Endothelial cell of umbilical vein (primary cell): ENCODE measurements at regions of chr19 and their contacts with region 1.

Region 1: GRCh38 chr19:12139885-12140547 is at the start of gene ZNF20:
- DNase-seq: peak; percentile 90
- H3K4me3 ChIP-seq: peak within 1 kb of the TSS; percentile 63 to 72 (median 68)
- H3K27ac ChIP-seq: peak within 1 kb of the TSS; percentile 30
- H3K4me1 ChIP-seq: no peaks in the 10 kb centered on the region
- H3K27me3 ChIP-seq: no peaks in the 10 kb centered on the region
- CTCF ChIP-seq: no peak
- POLR2A ChIP-seq: no peak
- total RNA-seq, gene ZNF20: 0.35 and 0.88 TPM in 2 replicates

Region 2: DNA sequence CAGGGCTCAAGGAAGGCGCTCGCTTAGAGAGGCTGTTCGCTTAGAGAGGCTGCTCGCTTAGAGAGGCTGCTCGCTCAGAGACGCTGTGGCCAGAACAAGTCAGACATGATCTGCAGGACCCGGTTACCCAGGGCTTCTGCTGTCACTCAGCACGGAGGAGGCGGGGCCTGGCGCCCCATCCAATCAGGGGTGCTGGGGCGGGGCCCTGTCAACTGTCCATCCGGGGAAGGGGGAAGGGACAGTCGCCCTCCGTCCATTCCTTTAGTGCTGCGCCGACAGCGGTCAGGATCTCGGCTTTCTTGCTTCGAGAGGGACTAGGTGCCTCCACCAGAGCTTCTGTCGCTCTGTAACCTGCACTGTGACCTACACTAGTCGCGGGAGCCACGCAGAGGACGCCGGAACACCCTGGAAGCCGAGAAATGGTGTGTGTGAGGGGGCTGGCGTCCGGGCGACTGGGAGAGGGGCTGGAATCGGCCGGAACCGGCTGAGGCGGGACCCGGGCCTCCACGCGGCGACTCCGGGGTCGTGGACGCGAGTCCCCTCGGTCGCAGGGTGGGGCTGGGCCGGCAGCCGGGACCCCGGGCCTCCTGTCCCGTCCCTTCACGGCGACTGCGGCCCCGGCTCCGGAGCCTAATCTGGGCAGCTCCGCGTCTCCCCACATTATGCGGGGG is 325.9 kb before region 1 on chr19 and contains the start of gene ZNF440:
- CTCF ChIA-PET with region 1: no interaction called
- POLR2A ChIA-PET with region 1: no interaction called
- dilution Hi-C with region 1: no loop called
- intact Hi-C with region 1: loop called (anchors 5 kb)
- DNase-seq: peak; percentile 95
- H3K4me3 ChIP-seq: peak within 1 kb of the TSS; percentile 61 to 70 (median 69)
- H3K27ac ChIP-seq: no peak within 1 kb of the TSS
- H3K4me1 ChIP-seq: peaks cover 6% of the 10 kb centered on the region
- H3K27me3 ChIP-seq: no peaks in the 10 kb centered on the region
- CTCF ChIP-seq: no peak
- POLR2A ChIP-seq: peak; percentile 95
- total RNA-seq, gene ZNF440: 9.1 and 13.3 TPM in 2 replicates

Region 3: GRCh38 chr19:11964858-11965645 is 175.0 kb before region 1 on chr19 and contains the start of gene ZNF763:
- CTCF ChIA-PET with region 1: interaction called, 6 read pairs
- POLR2A ChIA-PET with region 1: no interaction called
- dilution Hi-C with region 1: no loop called
- intact Hi-C with region 1: loop called (anchors 1 kb)
- DNase-seq: peak; percentile 48
- H3K4me3 ChIP-seq: peak within 1 kb of the TSS; percentile 24 to 66 (median 51)
- H3K27ac ChIP-seq: no peak within 1 kb of the TSS
- H3K4me1 ChIP-seq: no peaks in the 10 kb centered on the region
- H3K27me3 ChIP-seq: no peaks in the 10 kb centered on the region
- CTCF ChIP-seq: no peak
- POLR2A ChIP-seq: no peak
- total RNA-seq, gene ZNF763: 0.48 and 0.77 TPM in 2 replicates

Region 4: GRCh38 chr19:12064590-12065538 is 75.2 kb before region 1 on chr19 and contains the start of gene ZNF844:
- CTCF ChIA-PET with region 1: interaction called, 20 read pairs
- POLR2A ChIA-PET with region 1: no interaction called
- dilution Hi-C with region 1: no loop called
- intact Hi-C with region 1: no loop called
- DNase-seq: peak; percentile 77
- H3K4me3 ChIP-seq: peak within 1 kb of the TSS; percentile 53 to 75 (median 70)
- H3K27ac ChIP-seq: peak within 1 kb of the TSS; percentile 55
- H3K4me1 ChIP-seq: no peaks in the 10 kb centered on the region
- H3K27me3 ChIP-seq: no peaks in the 10 kb centered on the region
- CTCF ChIP-seq: no peak
- POLR2A ChIP-seq: no peak
- total RNA-seq, gene ZNF844: 0.90 and 3.8 TPM in 2 replicates

Region 5: GRCh38 chr19:12180377-12180776 is 40.4 kb after region 1 on chr19:
- CTCF ChIA-PET with region 1: no interaction called
- POLR2A ChIA-PET with region 1: no interaction called
- dilution Hi-C with region 1: no loop called
- intact Hi-C with region 1: no loop called
- DNase-seq: no peak
- H3K4me3 ChIP-seq: no peak overlapping the region
- H3K27ac ChIP-seq: no peak overlapping the region
- H3K4me1 ChIP-seq: no peaks in the 10 kb centered on the region
- H3K27me3 ChIP-seq: no peaks in the 10 kb centered on the region
- CTCF ChIP-seq: no peak
- POLR2A ChIP-seq: no peak